Cardiac septum (tissue), 1 donor: ENCODE measurements at regions of chrX and their contacts with region 1.

Region 1: DNA sequence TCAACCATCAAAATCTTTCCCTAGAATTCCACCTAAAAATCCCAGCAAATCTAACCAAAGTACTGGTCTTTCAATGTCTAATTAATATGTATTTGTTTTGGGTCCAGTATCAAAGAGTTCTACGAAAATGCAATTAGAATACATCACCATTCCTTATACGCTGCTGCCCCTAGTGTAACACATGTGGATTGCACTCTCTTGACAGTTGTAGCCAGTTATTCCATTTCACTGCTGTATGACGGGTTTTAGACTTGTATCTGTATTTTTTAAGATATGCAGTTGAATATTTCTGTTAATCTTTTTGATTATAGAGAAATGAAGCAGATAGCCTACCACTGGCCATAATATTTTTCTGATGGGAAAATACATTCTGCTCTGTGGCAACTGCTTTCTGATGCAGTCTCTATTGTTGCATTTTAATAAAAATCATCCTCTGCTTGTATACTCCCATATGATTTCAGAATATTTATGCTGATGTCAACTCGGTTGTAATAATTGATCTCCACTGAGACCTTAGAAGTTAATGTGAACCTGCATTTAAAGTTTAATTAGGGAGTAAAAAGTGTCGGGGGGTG is 17.1 kb upstream of the PAGE2B start:
- DNase-seq: no peak

Region 2: GRCh38 chrX:53317365-53318069 is 1740.2 kb before region 1 on chrX:
- intact Hi-C with region 1: loop called (anchors 10 kb)
- DNase-seq: peak; percentile 84

Region 3: DNA sequence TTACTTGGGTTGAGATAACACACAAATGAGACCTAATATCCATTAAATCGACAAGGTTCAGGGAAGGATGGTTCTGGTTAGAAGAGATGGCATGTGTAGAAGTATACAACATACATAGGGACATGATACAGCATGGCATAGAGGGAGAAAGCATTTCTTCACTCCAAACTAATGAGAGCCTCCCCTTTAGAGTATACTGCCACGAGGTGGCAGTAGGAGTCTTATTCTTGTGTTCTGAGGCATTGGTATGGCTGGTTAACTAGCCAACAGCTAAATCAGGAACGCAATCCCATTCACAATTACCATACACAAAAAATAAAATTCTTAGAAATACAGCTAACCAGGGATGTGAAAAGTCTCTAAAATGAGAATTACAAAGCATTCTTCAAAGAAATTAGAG is 166.2 kb before region 1 on chrX:
- intact Hi-C with region 1: loop called (anchors 10 kb)
- DNase-seq: no peak

Region 4: DNA sequence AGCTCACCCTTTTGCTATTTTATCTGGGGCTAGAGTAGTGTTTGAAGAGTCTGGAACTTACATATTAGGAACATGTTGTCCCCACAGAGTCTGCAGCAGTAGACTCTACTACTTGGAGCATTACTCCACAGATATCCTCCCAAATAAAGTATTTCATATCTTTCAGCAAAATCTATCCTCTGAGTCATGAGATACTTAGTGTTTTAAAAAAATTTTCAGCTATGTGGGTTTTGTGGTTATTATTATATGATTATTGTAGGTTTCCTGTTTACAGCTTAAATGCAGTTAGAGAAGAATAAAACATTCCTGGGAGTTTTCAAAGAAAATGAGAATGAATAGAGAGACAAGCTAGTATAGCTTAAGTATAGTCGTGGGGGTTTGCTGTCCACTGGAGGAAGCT is 62.0 kb after region 1 on chrX:
- intact Hi-C with region 1: no loop called
- DNase-seq: no peak